ENCODE measurements at regions of chr12 and their contacts with region 1.

Region 1: DNA sequence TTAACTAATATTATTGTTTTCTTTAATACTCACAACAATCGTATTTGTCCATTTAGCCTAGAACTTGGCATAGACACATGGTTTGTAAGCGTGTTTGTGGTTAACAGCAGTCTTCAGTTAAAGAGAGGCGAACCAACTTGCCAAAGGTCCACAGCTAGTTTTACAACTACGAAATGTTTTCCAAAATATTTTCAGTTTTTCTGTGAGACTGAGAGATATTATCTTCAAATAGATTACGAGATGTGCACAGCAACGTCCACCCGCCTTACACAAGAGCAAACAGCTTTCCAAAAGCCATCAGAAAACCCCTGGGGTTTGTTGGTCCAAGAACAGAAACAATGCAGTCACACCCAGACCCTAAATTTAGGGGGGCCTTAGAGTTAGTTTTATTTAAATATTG is 58.6 kb upstream of the RASSF3 start:
- DNase-seq: no peak
- H3K4me3 Mint-ChIP-seq: no peak overlapping the region
- H3K27ac Mint-ChIP-seq: no peak overlapping the region
- H3K4me1 Mint-ChIP-seq: peaks cover 8% of the 10 kb centered on the region
- H3K27me3 Mint-ChIP-seq: no peaks in the 10 kb centered on the region

Region 2: DNA sequence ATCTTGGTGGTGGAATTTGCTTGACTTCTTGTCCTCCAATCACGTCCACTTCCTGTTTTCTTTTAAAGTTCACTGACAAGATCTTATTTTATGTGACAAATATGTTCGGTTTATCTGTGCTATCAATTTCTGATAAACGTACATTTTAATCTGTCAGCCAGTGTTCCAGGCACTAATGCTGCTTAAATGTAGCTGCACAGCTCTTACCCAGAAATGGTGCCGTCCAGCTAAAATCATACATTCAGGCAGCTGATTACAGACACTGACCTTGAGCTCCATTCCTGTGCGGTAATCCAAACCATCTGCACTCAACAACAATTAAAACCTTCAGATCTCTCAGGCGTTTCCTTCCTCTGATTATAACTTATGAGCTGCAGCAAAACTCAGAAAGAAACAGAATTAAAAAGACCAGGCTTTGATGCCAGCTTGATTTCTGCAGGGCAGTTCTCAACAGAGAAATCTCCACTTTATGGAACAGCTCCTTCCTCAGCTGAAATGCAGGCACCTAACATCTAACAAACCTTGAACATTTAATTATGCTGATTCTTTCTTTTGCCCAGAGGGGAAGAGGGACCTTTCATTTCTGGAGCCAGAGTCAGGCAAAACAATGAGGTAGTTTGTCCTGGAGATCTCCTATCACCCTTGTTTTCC is 32.2 kb after region 1 on chr12:
- CTCF ChIA-PET with region 1: interaction called, 10 read pairs
- POLR2A ChIA-PET with region 1: no interaction called
- intact Hi-C with region 1: loop called (anchors 5 kb)
- DNase-seq: no peak
- H3K4me3 Mint-ChIP-seq: peak overlapping the region; percentile 45
- H3K27ac Mint-ChIP-seq: peak overlapping the region; percentile 63
- H3K4me1 Mint-ChIP-seq: peaks cover 28% of the 10 kb centered on the region
- H3K27me3 Mint-ChIP-seq: no peaks in the 10 kb centered on the region

Region 3: GRCh38 chr12:64669270-64669842 is 117.7 kb after region 1 on chr12:
- CTCF ChIA-PET with region 1: interaction called, 5 read pairs
- POLR2A ChIA-PET with region 1: no interaction called
- intact Hi-C with region 1: loop called (anchors 1 kb)
- DNase-seq: peak; percentile 50
- H3K4me3 Mint-ChIP-seq: peak overlapping the region; percentile 85
- H3K27ac Mint-ChIP-seq: peak overlapping the region; percentile 96
- H3K4me1 Mint-ChIP-seq: peaks cover 91% of the 10 kb centered on the region
- H3K27me3 Mint-ChIP-seq: no peaks in the 10 kb centered on the region

Region 4: GRCh38 chr12:64706306-64706705 is 154.6 kb after region 1 on chr12:
- CTCF ChIA-PET with region 1: interaction called, 39 read pairs
- POLR2A ChIA-PET with region 1: no interaction called
- intact Hi-C with region 1: no loop called
- DNase-seq: no peak
- H3K4me3 Mint-ChIP-seq: no peak overlapping the region
- H3K27ac Mint-ChIP-seq: no peak overlapping the region
- H3K4me1 Mint-ChIP-seq: peaks cover 6% of the 10 kb centered on the region
- H3K27me3 Mint-ChIP-seq: no peaks in the 10 kb centered on the region

Region 5: DNA sequence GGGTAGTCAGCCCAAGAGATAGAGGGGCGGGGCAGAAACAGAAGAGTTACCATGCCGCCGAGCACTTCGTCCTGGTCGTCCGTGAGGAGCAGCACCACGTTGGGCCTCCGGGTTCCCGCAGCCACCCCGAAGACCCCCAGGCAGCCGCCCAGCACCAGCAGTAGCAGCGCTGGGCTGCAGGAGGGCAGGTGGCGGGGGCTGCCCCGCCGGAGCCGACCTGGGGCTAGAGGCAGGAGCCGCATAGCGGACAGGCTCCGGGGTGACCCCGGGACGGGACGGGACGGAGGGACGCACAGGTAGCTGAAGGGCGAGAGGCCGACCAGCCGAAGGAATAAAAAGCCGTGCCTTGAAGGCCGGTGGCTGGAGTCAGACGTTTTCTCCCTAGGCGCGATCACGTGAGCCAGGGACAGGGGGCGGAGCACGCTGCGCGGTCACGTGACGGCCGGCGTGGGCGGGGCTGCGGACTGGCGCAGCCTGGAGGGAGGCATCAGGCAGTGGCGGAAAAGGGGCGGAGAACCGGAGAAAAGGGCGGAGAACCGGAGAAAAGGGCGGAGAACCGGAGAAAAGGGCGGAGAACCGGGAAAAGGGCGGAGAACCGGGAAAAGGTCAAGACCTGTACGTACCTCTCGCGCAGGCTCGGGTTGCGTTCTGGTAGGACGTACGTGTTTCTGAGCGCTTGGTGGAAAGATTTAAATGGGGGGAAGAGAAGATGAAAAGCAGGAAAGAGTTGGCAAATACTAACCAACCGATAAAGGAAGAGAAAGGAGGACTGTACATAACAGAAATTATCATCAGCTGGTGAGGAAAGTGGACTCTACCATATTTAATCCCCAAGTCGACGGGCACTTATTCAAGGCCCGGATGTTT is 207.6 kb after region 1 on chr12 and contains the start of gene GNS:
- CTCF ChIA-PET with region 1: interaction called, 4 read pairs
- POLR2A ChIA-PET with region 1: no interaction called
- intact Hi-C with region 1: loop called (anchors 1 kb)
- DNase-seq: peak; percentile 97
- H3K4me3 Mint-ChIP-seq: peak within 1 kb of the TSS; percentile 85
- H3K27ac Mint-ChIP-seq: peak within 1 kb of the TSS; percentile 90
- H3K4me1 Mint-ChIP-seq: peaks cover 43% of the 10 kb centered on the region
- H3K27me3 Mint-ChIP-seq: no peaks in the 10 kb centered on the region
- total RNA-seq, gene GNS: 21.2 to 23.1 TPM